ENCODE measurements at regions of chr2 and their contacts with region 1.

Region 1: GRCh38 chr2:237165405-237166276 is 80.0 kb downstream of the COPS8 start:
- DNase-seq: peak; percentile 56
- ATAC-seq: peak; percentile 64
- H3K4me3 ChIP-seq: no peak overlapping the region
- H3K27ac ChIP-seq: no peak overlapping the region
- H3K4me1 ChIP-seq: no peaks in the 10 kb centered on the region
- H3K27me3 ChIP-seq: no peaks in the 10 kb centered on the region
- CTCF ChIP-seq: peak; percentile 85

Region 2: GRCh38 chr2:237122214-237122666 is 43.4 kb before region 1 on chr2:
- CTCF ChIA-PET with region 1: no interaction called
- POLR2A ChIA-PET with region 1: no interaction called
- intact Hi-C with region 1: loop called (anchors 1 kb)
- DNase-seq: peak; percentile 73
- ATAC-seq: peak; percentile 94
- H3K4me3 ChIP-seq: no peak overlapping the region
- H3K27ac ChIP-seq: no peak overlapping the region
- H3K4me1 ChIP-seq: peaks cover 17% of the 10 kb centered on the region
- H3K27me3 ChIP-seq: no peaks in the 10 kb centered on the region
- CTCF ChIP-seq: peak; percentile 68